Psoas muscle (tissue), 8 donors: ENCODE measurements at regions of chr17 and their contacts with region 1.

Region 1: GRCh38 chr17:50269477-50270434 is 4.5 kb upstream of the TMEM92 start:
- DNase-seq: peak; percentile 73 to 78
- ATAC-seq: peak; percentile 59 to 79 (median 72)
- H3K4me3 ChIP-seq: no peak overlapping the region
- H3K27ac ChIP-seq: peak overlapping the region; percentile 1
- H3K4me1 ChIP-seq: no peaks in the 10 kb centered on the region
- H3K27me3 ChIP-seq: peaks cover 0 to 16% (median 6%) of the 10 kb centered on the region in 3 donors
- CTCF ChIP-seq: peak; percentile 55

Region 2: DNA sequence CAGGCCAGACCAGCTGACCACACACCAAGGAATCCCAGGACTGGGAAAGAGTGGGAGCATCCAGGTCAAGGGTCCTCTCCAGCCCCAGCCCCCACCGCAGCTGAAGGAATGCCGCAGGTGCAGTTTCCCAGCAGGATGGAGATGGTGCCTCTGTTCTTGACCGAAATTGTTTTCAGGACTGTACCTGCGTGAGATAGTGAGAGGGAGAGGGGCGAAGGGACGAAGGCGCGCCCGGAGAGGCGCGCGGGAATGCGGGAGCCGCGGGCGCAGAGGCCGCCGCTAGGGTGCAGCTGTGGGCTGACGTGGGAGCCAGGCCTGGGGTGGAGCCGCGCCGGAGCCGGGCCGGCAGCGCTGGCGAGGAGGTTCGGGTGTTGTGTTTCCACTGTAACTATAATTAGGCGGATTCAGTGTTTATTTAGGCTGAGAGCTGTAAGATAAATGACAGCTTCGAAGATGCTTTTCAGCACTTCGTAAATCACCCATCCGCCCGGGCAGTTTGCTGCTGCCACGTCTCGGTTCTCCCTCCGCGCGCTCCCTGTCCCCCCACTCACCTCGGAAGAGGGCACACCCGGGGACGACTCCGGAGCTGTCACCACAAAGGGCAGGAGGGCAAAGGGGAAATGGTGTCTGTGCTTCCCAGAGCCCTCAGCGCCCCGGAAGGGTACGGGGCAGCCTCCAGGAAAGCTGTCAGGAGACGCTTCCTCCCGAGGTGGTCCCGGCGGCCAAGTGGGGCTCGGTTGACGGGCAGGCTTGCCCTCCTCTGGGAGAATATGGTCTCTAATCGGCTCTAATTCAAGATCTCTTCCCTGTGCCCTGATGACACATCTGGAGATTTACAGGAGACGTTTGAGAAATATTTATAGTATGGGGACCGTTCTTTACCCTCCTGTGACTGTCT is 1777.1 kb before region 1 on chr17:
- intact Hi-C with region 1: no loop called
- DNase-seq: peak; percentile 76 to 90
- ATAC-seq: peak; percentile 95 to 100 (median 98)
- H3K4me3 ChIP-seq: peak overlapping the region; percentile 40
- H3K27ac ChIP-seq: no peak overlapping the region
- H3K4me1 ChIP-seq: peaks cover 6% of the 10 kb centered on the region
- H3K27me3 ChIP-seq: peaks cover 0 to 12% (median 2%) of the 10 kb centered on the region in 3 donors
- CTCF ChIP-seq: peak; percentile 89

Region 3: DNA sequence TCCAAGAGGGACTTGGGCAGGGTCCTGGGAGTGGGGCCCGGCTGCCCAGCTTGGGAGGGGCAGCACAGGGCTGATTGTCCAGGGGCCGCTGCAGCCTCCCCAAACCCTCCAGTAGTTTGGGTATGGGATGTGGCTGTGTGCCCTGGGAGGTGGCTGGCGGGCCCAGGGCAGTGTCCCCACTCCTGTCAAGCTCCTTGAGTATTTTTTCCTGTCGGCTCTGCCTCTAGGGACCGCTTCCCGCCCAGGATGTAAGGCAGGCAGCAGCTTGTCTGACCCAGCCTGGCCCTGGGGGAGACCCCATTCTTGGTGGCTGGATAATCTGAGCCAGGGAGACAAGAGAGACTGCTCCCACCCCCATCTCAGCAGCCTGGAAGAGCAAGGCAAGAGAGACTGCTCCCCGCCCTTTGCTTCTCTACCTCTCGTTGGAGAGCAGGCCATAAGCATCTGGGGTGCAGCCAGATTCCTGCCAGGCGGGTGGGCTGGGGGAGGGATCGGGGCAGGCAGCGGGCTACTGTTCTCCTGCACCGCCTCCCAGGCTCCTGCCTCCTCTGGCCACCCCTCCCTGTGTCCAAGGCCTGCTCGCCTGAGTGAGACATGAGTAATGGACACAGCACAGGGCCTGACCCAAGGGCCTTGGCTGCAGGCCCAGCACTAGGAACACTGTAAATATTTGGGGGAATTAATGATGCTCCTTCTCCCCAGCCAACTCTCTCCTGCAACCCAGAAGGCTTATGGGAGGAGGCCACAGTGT is 232.3 kb before region 1 on chr17:
- intact Hi-C with region 1: loop called in 1 of 2 experiments (anchors 10 kb)
- DNase-seq: peak in 1 of 2 donors; percentile 38
- ATAC-seq: peak in 1 of 4 donors; percentile 48
- H3K4me3 ChIP-seq: no peak overlapping the region
- H3K27ac ChIP-seq: no peak overlapping the region
- H3K4me1 ChIP-seq: no peaks in the 10 kb centered on the region
- H3K27me3 ChIP-seq: no peaks in the 10 kb centered on the region
- CTCF ChIP-seq: no peak

Region 4: DNA sequence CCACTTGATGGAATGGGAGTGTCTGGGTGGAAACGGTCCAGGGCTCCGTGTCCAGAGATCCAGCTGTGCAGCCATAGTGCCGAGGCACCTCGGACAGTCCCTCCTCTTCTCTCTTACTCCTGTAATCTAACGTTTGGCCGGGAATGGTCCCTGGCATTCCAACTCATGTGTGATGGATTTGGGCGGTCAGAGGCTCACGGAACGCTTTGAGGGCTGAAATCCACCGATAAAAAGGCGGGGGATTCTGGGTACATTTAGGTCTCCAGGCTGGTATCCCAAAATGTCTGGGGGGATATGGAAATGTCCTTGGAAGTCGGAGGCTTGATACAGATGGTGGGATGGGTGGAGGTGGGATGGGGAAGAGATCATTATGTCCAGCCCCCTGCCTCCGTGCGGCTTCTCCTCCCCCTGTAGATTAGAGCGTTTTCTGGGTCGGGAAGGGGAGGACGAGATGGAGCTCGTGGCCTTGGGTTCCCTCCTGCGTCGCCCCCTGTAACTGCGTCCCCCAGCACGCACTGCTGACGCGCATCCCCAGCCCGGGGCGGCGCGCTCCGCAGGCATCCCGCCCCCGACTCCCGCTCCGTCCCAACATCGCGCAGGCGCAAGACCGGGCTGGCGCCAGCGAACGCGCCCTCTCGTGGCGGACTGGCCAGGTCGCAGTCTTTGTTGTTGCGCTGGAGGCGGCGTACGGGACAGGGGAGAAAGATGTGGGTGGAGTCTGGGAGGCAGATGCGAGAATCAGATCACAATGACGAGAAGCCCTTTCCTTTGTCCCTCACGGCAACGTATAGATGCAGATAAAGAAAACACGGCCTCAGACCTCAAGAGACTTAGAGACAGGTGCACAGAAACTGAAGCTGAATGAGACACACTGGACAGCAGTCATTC is 108.5 kb before region 1 on chr17:
- intact Hi-C with region 1: no loop called
- DNase-seq: peak; percentile 94 to 95
- ATAC-seq: peak; percentile 75 to 82 (median 78)
- H3K4me3 ChIP-seq: peak overlapping the region; percentile 76
- H3K27ac ChIP-seq: peak overlapping the region; percentile 66
- H3K4me1 ChIP-seq: peaks cover 33% of the 10 kb centered on the region
- H3K27me3 ChIP-seq: no peaks in the 10 kb centered on the region
- CTCF ChIP-seq: peak; percentile 91

Region 5: GRCh38 chr17:50200457-50201275 is 69.1 kb before region 1 on chr17:
- intact Hi-C with region 1: loop called (anchors 1 to 2 kb)
- DNase-seq: peak; percentile 88 to 93
- ATAC-seq: peak; percentile 83 to 93 (median 86)
- H3K4me3 ChIP-seq: peak overlapping the region; percentile 58
- H3K27ac ChIP-seq: peak overlapping the region; percentile 67
- H3K4me1 ChIP-seq: peaks cover 7% of the 10 kb centered on the region
- H3K27me3 ChIP-seq: peaks cover 0 to 33% (median 0%) of the 10 kb centered on the region in 3 donors
- CTCF ChIP-seq: peak; percentile 100